ENCODE measurements at regions of chr10 and their contacts with region 1.

Region 1: GRCh38 chr10:73772280-73773151 is 9.3 kb upstream of the CHCHD1 start:
- DNase-seq: peak; percentile 80
- H3K4me3 ChIP-seq: peak overlapping the region; percentile 40 to 85 (median 79)
- H3K27ac ChIP-seq: peak overlapping the region; percentile 72
- H3K4me1 ChIP-seq: peaks cover 20% of the 10 kb centered on the region
- H3K27me3 ChIP-seq: no peaks in the 10 kb centered on the region
- CTCF ChIP-seq: no peak
- POLR2A ChIP-seq: peak; percentile 89

Region 2: GRCh38 chr10:73743905-73744663 is 28.4 kb before region 1 on chr10 and contains the start of gene SEC24C:
- CTCF ChIA-PET with region 1: no interaction called
- POLR2A ChIA-PET with region 1: no interaction called
- dilution Hi-C with region 1: no loop called
- intact Hi-C with region 1: loop called (anchors 1 kb)
- DNase-seq: peak; percentile 97
- H3K4me3 ChIP-seq: peak within 1 kb of the TSS; percentile 75 to 87 (median 77)
- H3K27ac ChIP-seq: peak within 1 kb of the TSS; percentile 97
- H3K4me1 ChIP-seq: peaks cover 17% of the 10 kb centered on the region
- H3K27me3 ChIP-seq: no peaks in the 10 kb centered on the region
- CTCF ChIP-seq: no peak
- POLR2A ChIP-seq: peak; percentile 79
- total RNA-seq, gene SEC24C: 91.2 and 95.5 TPM in 2 replicates

Region 3: GRCh38 chr10:73785221-73785720 is 12.8 kb after region 1 on chr10 and contains the start of gene ZSWIM8:
- CTCF ChIA-PET with region 1: interaction called, 10 read pairs
- POLR2A ChIA-PET with region 1: interaction called, 11 read pairs
- dilution Hi-C with region 1: no loop called
- intact Hi-C with region 1: loop called (anchors 1 kb)
- DNase-seq: peak; percentile 95
- H3K4me3 ChIP-seq: peak within 1 kb of the TSS; percentile 51 to 73 (median 68)
- H3K27ac ChIP-seq: peak within 1 kb of the TSS; percentile 46
- H3K4me1 ChIP-seq: peaks cover 33% of the 10 kb centered on the region
- H3K27me3 ChIP-seq: no peaks in the 10 kb centered on the region
- CTCF ChIP-seq: peak in 1 of 2 donors; percentile 25
- POLR2A ChIP-seq: peak; percentile 65
- total RNA-seq, gene ZSWIM8: 111 and 112 TPM in 2 replicates

Region 4: GRCh38 chr10:73810735-73811465 is 38.4 kb after region 1 on chr10:
- CTCF ChIA-PET with region 1: interaction called, 5 read pairs
- POLR2A ChIA-PET with region 1: no interaction called
- dilution Hi-C with region 1: no loop called
- intact Hi-C with region 1: loop called (anchors 5 kb)
- DNase-seq: peak; percentile 28
- H3K4me3 ChIP-seq: peak overlapping the region; percentile 67 to 84 (median 73)
- H3K27ac ChIP-seq: peak overlapping the region; percentile 80
- H3K4me1 ChIP-seq: peaks cover 12% of the 10 kb centered on the region
- H3K27me3 ChIP-seq: no peaks in the 10 kb centered on the region
- CTCF ChIP-seq: no peak
- POLR2A ChIP-seq: no peak

Region 5: DNA sequence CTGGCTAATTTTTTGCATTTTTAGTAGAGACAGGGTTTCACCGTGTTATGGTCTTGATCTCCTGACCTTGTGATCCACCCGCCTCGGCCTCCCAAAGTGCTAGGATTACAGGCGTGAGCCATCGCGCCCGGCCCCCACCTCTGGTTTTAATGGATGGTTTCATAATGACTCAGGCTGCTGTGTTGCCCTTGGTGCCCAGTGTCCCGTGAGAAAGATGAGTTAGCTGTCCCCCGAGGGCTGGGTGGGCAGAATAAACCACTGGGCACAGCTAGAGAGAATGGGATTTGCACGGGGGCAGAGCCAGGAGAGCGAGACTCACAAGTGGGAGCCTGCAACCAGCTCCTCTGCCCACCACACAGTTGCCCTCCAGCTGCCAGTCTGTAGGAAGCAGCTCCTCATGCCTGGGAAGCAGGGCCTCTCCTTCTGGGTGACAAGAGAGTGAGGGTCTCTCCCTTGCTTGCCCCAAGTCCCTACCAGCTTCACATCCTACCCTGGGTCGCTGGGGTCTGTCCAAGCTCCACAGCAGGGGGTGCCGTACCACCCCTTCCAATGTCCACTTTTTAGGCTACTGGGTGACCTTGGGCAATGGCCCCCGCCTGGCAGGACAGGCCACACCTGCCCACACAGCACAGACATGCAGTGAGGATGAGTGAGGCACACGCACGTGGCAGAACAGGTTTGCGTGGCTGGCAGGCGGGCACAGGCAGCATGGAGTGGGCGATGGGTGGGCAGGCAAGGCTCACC is 55.0 kb after region 1 on chr10:
- CTCF ChIA-PET with region 1: no interaction called
- POLR2A ChIA-PET with region 1: no interaction called
- dilution Hi-C with region 1: no loop called
- intact Hi-C with region 1: no loop called
- DNase-seq: no peak
- H3K4me3 ChIP-seq: no peak overlapping the region
- H3K27ac ChIP-seq: no peak overlapping the region
- H3K4me1 ChIP-seq: no peaks in the 10 kb centered on the region
- H3K27me3 ChIP-seq: no peaks in the 10 kb centered on the region
- CTCF ChIP-seq: no peak
- POLR2A ChIP-seq: no peak

Measured in endothelial cell of umbilical vein (primary cell).